Upper lobe of right lung (tissue), 1 donor: ENCODE measurements at regions of chr13 and their contacts with region 1.

Region 1: DNA sequence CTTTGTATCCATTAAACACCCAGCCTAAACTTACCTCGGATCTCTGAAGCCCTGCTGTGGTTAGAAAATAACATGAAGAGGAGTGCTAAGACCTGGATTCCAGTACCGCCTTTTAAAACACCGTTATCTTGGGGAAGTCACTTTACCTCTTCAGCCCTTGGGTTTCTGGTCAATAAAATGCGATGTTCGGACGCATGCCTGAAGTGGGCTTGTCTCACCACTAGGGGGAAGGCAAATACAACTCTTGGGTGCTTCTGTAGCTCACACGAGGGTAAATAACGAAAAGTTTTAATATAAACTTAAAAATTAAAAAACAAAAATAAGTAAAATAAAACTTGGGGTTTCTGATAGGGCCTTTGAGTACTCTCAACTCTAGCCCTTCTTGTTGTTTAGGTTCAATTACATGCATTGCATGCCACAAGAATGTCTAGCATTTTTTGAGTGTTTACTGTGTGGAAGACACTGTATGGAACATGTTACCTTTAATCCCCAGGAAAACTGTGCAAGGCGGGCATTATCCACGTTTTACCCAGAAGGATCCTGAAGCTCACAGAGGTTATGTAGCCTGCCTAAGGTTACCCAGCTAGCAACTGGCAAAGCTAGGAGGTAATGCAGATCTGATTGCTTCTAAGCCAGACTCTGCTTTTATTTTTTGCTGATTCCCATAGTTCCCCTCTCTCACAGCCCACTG is 240.4 kb downstream of the LMO7 start:
- DNase-seq: peak; percentile 63
- ATAC-seq: peak; percentile 92
- H3K4me3 ChIP-seq: no peak overlapping the region
- H3K27ac ChIP-seq: no peak overlapping the region
- H3K4me1 ChIP-seq: no peaks in the 10 kb centered on the region
- H3K27me3 ChIP-seq: no peaks in the 10 kb centered on the region
- CTCF ChIP-seq: peak; percentile 87

Region 2: GRCh38 chr13:76473552-76474134 is 597.1 kb after region 1 on chr13:
- intact Hi-C with region 1: loop called (anchors 10 kb)
- DNase-seq: no peak
- ATAC-seq: peak; percentile 99
- H3K4me3 ChIP-seq: no peak overlapping the region
- H3K27ac ChIP-seq: peak overlapping the region; percentile 12
- H3K4me1 ChIP-seq: no peaks in the 10 kb centered on the region
- H3K27me3 ChIP-seq: no peaks in the 10 kb centered on the region
- CTCF ChIP-seq: peak; percentile 86

Region 3: DNA sequence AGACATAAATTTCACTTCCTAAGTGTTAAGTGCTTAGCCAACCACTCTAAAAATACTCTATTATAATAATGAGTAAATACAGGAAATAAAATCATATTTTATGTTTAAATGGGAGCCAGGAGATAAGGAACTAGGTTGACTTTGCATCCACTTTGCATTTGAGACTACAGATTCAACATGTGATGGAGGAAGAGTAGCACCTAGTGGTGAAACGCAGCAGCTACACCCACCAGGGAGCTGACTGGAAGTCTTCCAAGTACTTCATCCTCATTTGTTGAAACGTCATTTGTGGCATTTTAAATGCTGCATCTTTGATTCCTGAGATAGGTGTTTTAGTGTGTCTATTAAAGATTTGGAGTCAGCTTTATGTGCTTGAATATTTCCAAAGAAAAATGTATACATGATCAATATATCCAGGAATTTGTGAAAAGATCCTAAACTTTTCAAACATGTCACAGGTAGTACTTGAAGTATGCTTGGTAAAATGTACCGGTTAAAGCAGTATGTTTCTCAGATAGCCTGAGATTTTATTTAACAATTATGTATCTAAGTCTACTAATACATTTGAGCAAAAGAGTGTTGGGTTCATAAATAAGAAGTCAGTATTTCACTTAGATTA is 1027.1 kb after region 1 on chr13:
- intact Hi-C with region 1: loop called (anchors 10 kb)
- DNase-seq: no peak
- ATAC-seq: peak; percentile 99
- H3K4me3 ChIP-seq: no peak overlapping the region
- H3K27ac ChIP-seq: no peak overlapping the region
- H3K4me1 ChIP-seq: no peaks in the 10 kb centered on the region
- H3K27me3 ChIP-seq: no peaks in the 10 kb centered on the region
- CTCF ChIP-seq: peak; percentile 100